HepG2 (cell line): ENCODE measurements at regions of chr2 and their contacts with region 1.

Region 1: DNA sequence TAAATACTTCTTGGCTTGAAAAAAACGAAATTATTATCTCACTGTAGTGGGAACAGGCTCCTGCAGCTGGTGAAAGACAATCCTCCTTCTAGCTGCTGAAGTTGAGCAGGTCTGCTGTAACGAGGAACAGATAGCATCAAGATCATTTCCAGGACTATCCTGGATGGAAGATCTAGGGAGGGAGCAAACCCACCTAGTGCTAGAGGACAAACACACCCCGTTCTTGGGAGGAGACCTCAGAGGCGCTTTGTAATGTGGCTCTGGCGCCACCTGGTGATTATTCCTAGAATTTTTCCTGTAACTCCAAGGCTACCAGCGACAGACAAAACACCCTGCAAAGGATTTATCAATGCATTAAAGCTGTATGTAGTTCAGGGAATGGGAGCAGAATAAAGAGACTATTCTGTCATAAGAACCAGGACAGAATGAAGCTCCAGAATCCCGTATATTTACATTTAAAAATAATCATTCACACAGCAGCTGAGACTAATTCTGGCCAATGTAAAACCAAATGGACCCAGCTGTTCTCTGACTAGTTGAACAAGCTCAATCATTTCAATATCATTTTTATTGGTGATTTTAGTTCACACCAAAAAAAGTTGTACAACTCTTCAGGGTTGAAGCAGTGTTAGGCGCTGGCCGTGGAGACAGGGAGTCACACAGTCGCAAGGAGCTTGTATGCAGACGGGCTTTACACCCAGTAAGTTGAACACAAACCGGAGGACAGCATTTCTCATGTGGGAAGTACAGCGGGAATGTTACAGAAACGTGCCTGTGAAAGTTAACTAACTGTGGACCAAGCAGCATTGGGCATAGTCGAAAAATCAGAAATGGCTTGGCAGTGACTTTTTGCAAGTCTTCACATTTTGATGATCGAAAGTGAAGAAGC is 290.3 kb downstream of the TRIB2 start:
- DNase-seq: peak; percentile 62
- ATAC-seq: peak; percentile 98
- H3K4me3 ChIP-seq: no peak overlapping the region
- H3K27ac ChIP-seq: no peak overlapping the region
- H3K4me1 ChIP-seq: no peaks in the 10 kb centered on the region
- H3K27me3 ChIP-seq: no peaks in the 10 kb centered on the region
- CTCF ChIP-seq: peak; percentile 88
- EP300 ChIP-seq: no peak
- POLR2A ChIP-seq: no peak
- RAD21 ChIP-seq: peak; percentile 74

Region 2: GRCh38 chr2:11743846-11744553 is 1263.1 kb before region 1 on chr2:
- CTCF ChIA-PET with region 1: no interaction called
- POLR2A ChIA-PET with region 1: no interaction called
- in situ Hi-C with region 1: no loop called
- intact Hi-C with region 1: loop called (anchors 10 kb)
- DNase-seq: peak; percentile 90
- ATAC-seq: peak; percentile 79
- H3K4me3 ChIP-seq: peak overlapping the region; percentile 51 to 71 (median 59)
- H3K27ac ChIP-seq: peak overlapping the region; percentile 34
- H3K4me1 ChIP-seq: peaks cover 74% of the 10 kb centered on the region
- H3K27me3 ChIP-seq: peaks cover 0 to 5% of the 10 kb centered on the region in 2 experiments; a peak in 2 of 5 replicates
- CTCF ChIP-seq: peak; percentile 41; the same call in 1 of the 2 replicates
- EP300 ChIP-seq: peak; percentile 50 to 71; a peak in 2 of 4 replicates
- POLR2A ChIP-seq: peak in 1 of 2 experiments; percentile 51; a peak in 3 of 4 replicates
- RAD21 ChIP-seq: no peak

Region 3: DNA sequence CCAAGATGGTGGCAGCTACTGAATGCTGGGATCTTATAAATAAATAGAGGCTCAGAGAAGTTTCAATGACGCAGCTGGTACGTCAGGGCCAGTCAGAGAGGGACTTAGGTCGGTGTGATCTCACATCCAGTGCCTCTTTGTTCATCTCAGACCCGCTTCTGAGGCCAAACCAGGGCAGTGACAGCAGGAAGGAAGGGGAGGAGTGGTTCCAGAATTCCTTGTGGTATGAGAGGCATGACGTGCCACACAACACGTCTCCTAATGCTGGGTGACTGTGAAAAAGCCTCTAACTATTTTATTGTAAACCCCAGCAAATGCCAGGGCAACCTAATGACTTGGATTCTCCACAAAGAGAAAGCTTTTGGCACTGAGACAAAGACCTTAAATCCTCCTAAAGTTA is 837.4 kb before region 1 on chr2:
- CTCF ChIA-PET with region 1: interaction called, 3 read pairs
- POLR2A ChIA-PET with region 1: no interaction called
- in situ Hi-C with region 1: loop called (anchors 5 kb)
- intact Hi-C with region 1: loop called (anchors 1 kb)
- DNase-seq: no peak
- ATAC-seq: no peak
- H3K4me3 ChIP-seq: no peak overlapping the region
- H3K27ac ChIP-seq: no peak overlapping the region
- H3K4me1 ChIP-seq: no peaks in the 10 kb centered on the region
- H3K27me3 ChIP-seq: no peaks in the 10 kb centered on the region
- CTCF ChIP-seq: no peak
- EP300 ChIP-seq: no peak
- POLR2A ChIP-seq: no peak
- RAD21 ChIP-seq: no peak

Region 4: DNA sequence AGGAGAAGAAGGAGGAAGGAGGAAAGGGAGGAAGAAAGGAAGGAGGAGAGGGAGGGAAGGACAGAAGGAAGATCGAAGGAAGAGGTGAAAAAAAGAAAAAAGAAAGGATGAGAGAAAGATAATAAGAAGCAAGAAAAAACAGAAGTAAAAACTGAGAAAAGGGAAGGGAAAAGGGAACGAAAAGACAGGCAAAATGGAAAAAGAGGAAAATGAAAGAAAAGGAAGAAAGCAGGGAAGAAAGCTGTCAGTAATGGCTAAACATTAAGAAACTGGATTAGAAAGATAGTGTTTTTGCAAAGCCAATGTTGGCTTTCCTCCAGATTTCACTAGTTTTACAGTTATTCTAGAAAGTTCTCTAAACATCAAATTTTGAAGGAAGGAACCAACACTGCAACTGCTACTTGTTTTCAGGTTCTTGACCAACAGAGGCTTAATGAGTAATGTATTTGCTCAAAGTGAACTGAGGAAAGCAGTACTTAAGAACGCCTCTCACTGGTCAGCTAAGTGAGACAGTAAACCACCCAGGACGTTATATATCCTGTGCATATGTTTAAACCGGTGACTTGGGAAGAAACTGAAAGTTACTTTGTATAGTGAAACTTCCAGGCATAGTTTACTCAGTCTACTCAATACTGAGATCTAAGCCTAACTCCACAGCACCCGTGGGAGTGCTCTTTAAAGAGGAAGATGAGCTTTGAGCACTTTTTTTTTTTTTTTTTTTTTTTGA is 576.5 kb before region 1 on chr2:
- CTCF ChIA-PET with region 1: no interaction called
- POLR2A ChIA-PET with region 1: no interaction called
- in situ Hi-C with region 1: no loop called
- intact Hi-C with region 1: loop called (anchors 5 kb)
- DNase-seq: no peak
- ATAC-seq: no peak
- H3K4me3 ChIP-seq: no peak overlapping the region
- H3K27ac ChIP-seq: no peak overlapping the region
- H3K4me1 ChIP-seq: no peaks in the 10 kb centered on the region
- H3K27me3 ChIP-seq: no peaks in the 10 kb centered on the region
- CTCF ChIP-seq: no peak
- EP300 ChIP-seq: no peak
- POLR2A ChIP-seq: no peak
- RAD21 ChIP-seq: no peak

Region 5: GRCh38 chr2:12941203-12941602 is 65.9 kb before region 1 on chr2:
- CTCF ChIA-PET with region 1: no interaction called
- POLR2A ChIA-PET with region 1: no interaction called
- in situ Hi-C with region 1: no loop called
- intact Hi-C with region 1: no loop called
- DNase-seq: no peak
- ATAC-seq: peak; percentile 75
- H3K4me3 ChIP-seq: no peak overlapping the region
- H3K27ac ChIP-seq: no peak overlapping the region
- H3K4me1 ChIP-seq: no peaks in the 10 kb centered on the region
- H3K27me3 ChIP-seq: no peaks in the 10 kb centered on the region
- CTCF ChIP-seq: no peak
- EP300 ChIP-seq: no peak
- POLR2A ChIP-seq: no peak
- RAD21 ChIP-seq: no peak

Region 6: DNA sequence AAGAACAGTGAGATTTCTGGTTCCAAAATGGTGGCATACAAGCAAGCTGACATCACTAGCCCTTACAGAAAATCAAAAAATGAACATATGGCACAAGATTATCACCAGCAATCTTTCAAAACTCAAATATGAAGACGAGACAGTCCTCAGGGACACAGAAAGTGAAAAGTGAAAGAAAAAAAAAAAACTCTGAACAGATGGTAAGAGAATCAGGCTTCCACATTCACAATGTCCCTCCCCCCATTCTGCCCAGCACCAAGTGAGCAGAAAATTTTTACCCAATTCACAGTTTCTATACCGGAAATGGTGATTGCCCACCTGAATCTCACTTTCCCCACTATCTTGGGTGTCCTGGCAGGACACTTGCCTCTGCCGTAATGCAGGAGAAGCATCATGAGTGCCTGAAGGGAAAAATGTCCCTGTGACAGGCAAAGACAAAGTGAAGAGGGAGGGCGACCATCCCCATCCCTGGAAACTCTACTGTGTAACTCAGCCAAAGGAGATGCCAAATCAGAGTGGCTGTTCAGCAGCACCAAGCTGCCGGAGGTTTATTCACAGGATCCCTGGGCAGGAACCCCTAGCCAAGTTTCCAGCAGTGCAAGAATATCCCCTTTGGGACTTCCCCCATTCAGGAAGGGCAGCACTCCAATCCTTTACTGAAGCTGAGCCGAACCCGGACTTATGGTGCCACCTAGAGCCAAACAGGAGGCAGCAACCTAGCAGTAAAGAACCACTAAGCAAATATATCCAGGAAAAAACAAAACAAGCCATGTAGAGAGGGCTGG is 1937.7 kb after region 1 on chr2:
- CTCF ChIA-PET with region 1: no interaction called
- POLR2A ChIA-PET with region 1: no interaction called
- in situ Hi-C with region 1: no loop called
- intact Hi-C with region 1: loop called (anchors 5 kb)
- DNase-seq: peak; percentile 58
- ATAC-seq: peak; percentile 99
- H3K4me3 ChIP-seq: no peak overlapping the region
- H3K27ac ChIP-seq: no peak overlapping the region
- H3K4me1 ChIP-seq: no peaks in the 10 kb centered on the region
- H3K27me3 ChIP-seq: no peaks in the 10 kb centered on the region
- CTCF ChIP-seq: peak; percentile 83
- EP300 ChIP-seq: no peak
- POLR2A ChIP-seq: no peak
- RAD21 ChIP-seq: peak; percentile 64